Mucosa of descending colon (tissue), 3 donors: ENCODE measurements at regions of chr10 and their contacts with region 1.

Region 1: GRCh38 chr10:95601116-95601719 is 40.0 kb upstream of the SORBS1 start:
- DNase-seq: peak in 2 of 3 donors; percentile 81 to 94
- ATAC-seq: peak; percentile 98
- H3K4me3 ChIP-seq: no peak overlapping the region
- H3K4me1 ChIP-seq: peaks cover 8% of the 10 kb centered on the region
- CTCF ChIP-seq: peak; percentile 67

Region 2: DNA sequence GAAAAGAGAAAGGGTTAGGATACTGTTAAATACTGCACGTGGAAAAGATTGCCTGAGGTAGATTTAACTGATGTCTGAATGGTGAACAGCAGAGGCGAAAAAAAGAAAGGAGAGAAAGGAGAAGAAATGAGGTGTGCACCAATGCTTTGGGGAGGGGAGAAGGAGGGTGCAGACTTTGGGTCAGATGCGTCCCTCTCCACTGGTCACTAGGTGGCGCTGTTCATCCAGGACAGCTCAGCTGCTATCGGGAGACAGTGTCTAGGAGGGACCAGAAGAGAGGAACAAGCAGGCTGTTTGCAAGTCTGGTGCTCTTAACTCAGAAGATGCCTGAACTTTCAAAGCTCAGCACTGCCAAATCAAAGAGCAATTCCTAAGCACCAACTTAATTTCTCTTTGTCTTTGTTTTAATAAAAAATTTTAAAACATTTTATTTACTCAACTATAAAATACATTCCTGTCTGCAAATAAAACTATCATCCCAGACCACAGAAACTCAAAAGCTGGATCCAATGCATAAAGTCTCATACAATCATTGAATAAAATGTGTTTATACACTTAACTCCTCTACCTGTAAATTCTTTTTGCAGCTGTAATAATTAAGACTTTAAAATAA is 226.5 kb before region 1 on chr10:
- intact Hi-C with region 1: loop called in 1 of 2 experiments (anchors 10 kb)
- DNase-seq: peak; percentile 65 to 80 (median 78)
- ATAC-seq: peak; percentile 99
- H3K4me3 ChIP-seq: no peak overlapping the region
- H3K4me1 ChIP-seq: no peaks in the 10 kb centered on the region
- CTCF ChIP-seq: peak; percentile 68

Region 3: DNA sequence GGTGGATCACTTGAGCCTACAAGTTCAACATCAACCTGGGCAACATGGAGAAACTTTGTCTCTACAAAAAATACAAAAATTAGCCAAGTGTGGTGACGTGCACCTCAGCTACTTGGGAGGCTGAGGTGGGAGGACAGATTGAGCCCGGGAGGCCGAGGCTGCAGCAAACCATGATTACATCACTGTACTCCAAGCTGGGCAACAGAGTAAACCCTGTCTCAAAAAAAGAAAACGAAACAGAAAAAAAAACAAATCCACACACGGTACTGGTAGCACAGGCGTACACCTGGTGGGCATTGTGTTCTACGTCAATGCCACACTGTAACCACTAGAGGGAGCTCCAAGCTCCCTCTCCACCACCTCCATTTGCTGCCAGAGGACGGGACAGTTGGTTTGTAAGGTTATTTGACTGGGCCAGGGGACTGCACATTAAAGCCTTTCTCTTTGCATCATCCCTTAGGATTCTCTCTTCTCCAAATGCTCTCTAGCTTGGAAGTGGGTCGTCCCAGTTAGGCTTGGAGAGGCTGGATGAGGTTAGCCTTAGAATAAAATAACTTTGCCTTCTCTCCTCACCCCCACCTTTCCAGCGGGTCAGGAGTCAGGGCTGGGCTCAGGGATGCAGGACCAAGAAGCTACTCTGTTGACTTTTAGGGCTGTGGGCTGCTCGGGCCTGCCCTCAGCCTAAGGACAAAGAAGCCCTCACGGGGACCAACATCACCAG is 170.8 kb before region 1 on chr10:
- intact Hi-C with region 1: loop called (anchors 2 to 10 kb)
- DNase-seq: peak in 1 of 3 donors; percentile 58
- ATAC-seq: peak; percentile 92
- H3K4me3 ChIP-seq: no peak overlapping the region
- H3K4me1 ChIP-seq: peaks cover 11% of the 10 kb centered on the region
- CTCF ChIP-seq: peak; percentile 88

Region 4: DNA sequence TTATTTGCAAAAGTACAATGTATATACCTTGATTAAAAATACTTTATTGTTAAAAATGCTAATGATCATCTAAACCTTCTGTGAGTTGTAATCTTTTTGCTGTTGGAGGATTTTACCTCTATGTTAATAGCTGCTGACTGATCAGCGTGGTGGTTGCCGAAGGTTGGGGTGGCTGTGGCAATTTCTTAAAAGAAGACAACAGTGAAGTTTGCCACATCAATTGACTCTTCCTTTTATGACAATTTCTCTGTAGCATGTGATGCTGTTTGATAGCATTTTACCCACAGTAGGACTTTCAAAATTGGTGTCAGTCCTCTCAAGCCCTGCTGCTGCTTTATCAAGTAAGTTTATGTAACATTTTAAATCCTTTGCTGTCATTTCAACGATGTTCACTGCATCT is 137.8 kb after region 1 on chr10:
- intact Hi-C with region 1: no loop called
- DNase-seq: no peak
- ATAC-seq: no peak
- H3K4me3 ChIP-seq: no peak overlapping the region
- H3K4me1 ChIP-seq: no peaks in the 10 kb centered on the region
- CTCF ChIP-seq: no peak